Naive thymus-derived CD4-positive, alpha-beta T cell (primary cell): ENCODE measurements at regions of chr11 and their contacts with region 1.

Region 1: GRCh38 chr11:66001942-66002647 is at the starts of genes BANF1 and EIF1AD:
- DNase-seq: peak; percentile 75 to 96 (median 94)
- ATAC-seq: peak; percentile 92
- H3K4me3 ChIP-seq: peak within 1 kb of the TSS; percentile 100
- H3K4me3 Mint-ChIP-seq: peak within 1 kb of the TSS; percentile 97 to 100 (median 99)
- H3K27ac ChIP-seq: peak within 1 kb of the TSS; percentile 92
- H3K27ac Mint-ChIP-seq: peak within 1 kb of the TSS; percentile 96 to 100 (median 98)
- H3K4me1 ChIP-seq: peaks cover 8 to 14% of the 10 kb centered on the region in 2 donors
- H3K4me1 Mint-ChIP-seq: peaks cover 21 to 58% (median 52%) of the 10 kb centered on the region in 7 donors
- H3K27me3 ChIP-seq: no peaks in the 10 kb centered on the region
- H3K27me3 Mint-ChIP-seq: no peaks in the 10 kb centered on the region
- total RNA-seq, gene BANF1: 54.5 to 234 (median 99.4) TPM
- total RNA-seq, gene EIF1AD: 49.9 to 114 (median 66.7) TPM

Region 2: DNA sequence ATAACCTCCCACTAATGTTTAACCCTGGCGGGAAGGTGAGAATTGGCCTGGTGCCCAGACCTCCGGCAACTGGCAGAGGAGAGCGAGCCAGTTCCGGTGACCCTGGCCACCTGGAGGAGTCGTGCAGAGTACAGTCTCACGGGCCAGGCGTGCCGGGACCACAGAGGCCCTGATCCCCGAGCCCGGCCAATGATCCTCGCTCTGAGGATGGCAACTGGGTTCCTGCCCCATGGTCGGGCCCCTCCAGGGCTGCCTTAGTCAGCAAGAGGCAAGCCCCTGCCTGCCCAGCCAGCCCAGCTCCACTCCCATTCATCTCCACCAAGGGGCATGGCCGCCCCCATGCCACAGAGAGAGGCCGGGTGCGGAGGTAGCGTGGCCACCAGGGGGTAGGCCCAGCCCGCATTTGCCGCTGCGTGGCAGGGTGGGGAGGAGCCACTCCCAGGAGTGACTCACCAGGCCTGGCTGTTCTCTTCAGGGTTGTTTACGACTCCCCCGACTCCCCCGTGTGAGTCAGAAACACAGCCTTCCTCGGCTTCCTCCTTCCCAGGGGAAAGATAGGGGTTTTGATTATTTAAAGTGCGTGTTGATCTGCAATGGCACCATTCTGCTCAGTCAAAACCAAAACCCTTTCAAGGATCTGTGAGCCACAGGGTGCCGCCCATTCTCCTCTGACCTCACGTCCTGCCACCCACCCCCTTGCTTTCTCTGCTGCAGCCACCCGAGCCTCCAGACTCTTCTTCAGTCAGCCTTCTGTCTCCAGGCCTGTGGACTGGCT is 619.9 kb before region 1 on chr11 and contains the start of gene SLC25A45:
- CTCF ChIA-PET with region 1: no interaction called
- POLR2A ChIA-PET with region 1: no interaction called
- intact Hi-C with region 1: no loop called
- DNase-seq: peak; percentile 82 to 95 (median 91)
- ATAC-seq: peak; percentile 91
- H3K4me3 ChIP-seq: peak within 1 kb of the TSS; percentile 76
- H3K4me3 Mint-ChIP-seq: peak within 1 kb of the TSS; percentile 82 to 98 (median 93)
- H3K27ac ChIP-seq: peak within 1 kb of the TSS; percentile 82
- H3K27ac Mint-ChIP-seq: peak within 1 kb of the TSS; percentile 97 to 100 (median 99)
- H3K4me1 ChIP-seq: peaks cover 42 to 45% of the 10 kb centered on the region in 2 donors
- H3K4me1 Mint-ChIP-seq: peaks cover 31 to 56% (median 46%) of the 10 kb centered on the region in 7 donors
- H3K27me3 ChIP-seq: no peaks in the 10 kb centered on the region
- H3K27me3 Mint-ChIP-seq: no peaks in the 10 kb centered on the region
- total RNA-seq, gene SLC25A45: 20.2 to 90.6 (median 34.1) TPM

Region 3: DNA sequence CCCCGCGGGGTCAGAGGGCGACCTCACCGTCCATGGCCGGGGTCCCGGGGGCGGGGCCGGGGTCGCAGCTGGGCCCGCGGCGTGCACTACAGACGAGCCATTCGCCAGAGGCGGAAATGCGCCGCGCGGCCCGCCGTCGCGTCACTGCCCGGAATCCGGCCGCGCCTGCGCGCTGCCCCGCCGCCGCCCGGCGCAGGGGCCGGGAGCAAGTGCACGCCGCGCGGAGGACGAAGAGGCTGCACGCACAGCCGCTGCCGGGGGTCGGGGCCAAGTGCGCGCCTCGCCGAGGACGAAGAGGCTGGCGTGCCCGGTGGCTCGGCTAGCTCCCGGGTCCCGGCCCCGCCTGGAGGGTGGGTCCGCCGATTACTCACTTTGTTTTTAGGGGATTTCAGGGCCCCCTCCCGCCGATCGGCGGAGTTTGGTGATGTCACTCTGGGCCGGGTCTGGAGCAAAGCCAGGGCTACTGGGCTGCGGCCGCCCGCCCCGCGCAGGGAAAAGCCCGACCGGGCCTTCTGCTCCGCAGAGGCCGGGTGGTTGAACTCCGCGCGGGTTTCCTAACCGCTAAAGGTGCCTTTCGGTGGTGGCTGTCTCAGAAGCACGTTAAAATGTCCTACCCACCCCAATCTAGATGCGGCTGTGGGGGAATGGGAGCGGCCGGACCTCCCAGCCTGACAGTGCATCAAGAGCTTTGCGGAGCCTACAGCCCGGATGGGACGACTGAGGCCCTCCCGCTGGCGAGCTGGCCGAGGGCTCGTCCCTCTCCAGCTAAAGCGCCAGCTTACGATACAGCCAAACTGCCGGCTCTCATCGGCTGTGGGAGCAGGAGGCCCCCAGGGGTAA is 339.1 kb before region 1 on chr11 and contains the start of gene RELA:
- CTCF ChIA-PET with region 1: no interaction called
- POLR2A ChIA-PET with region 1: interaction called, 4 read pairs
- intact Hi-C with region 1: loop called in 1 of 2 experiments (anchors 1 kb)
- DNase-seq: peak; percentile 84 to 92 (median 89)
- ATAC-seq: peak; percentile 92
- H3K4me3 ChIP-seq: peak within 1 kb of the TSS; percentile 85
- H3K4me3 Mint-ChIP-seq: peak within 1 kb of the TSS; percentile 86 to 93 (median 90)
- H3K27ac ChIP-seq: peak within 1 kb of the TSS; percentile 99
- H3K27ac Mint-ChIP-seq: peak within 1 kb of the TSS; percentile 86 to 95 (median 92)
- H3K4me1 ChIP-seq: peaks cover 20 to 33% of the 10 kb centered on the region in 2 donors
- H3K4me1 Mint-ChIP-seq: peaks cover 10 to 43% (median 31%) of the 10 kb centered on the region in 7 donors
- H3K27me3 ChIP-seq: no peaks in the 10 kb centered on the region
- H3K27me3 Mint-ChIP-seq: no peaks in the 10 kb centered on the region
- total RNA-seq, gene RELA: 106 to 303 (median 165) TPM

Region 4: DNA sequence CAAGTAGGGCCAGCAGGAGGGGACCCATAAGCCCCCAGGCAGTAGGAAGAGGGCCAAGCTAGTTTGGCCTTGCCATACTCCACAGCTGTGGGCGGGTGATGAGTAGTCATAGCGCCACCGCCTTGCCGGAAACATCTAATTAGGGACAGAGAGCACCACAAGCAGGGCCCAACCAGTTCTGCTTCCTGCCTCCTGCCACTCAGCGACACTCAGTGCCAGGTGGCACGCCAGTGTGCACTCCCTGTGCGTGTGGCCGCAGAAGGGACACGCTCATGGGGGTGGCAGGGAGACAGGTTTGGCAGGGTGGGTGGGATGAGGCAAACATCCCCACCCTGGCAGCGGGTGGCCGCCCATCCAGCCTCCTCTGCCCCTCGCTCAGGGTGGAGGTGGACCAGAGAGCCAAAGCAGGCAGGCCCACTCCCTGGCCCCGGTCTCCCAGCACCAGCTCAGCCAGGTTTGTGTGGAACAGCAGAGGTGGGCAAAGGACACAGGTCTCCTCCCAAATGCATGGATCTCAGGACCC is 210.3 kb before region 1 on chr11:
- CTCF ChIA-PET with region 1: no interaction called
- POLR2A ChIA-PET with region 1: no interaction called
- intact Hi-C with region 1: no loop called
- DNase-seq: peak in 2 of 9 donors; percentile 32 to 67
- ATAC-seq: peak; percentile 82
- H3K4me3 ChIP-seq: no peak overlapping the region
- H3K4me3 Mint-ChIP-seq: no peak overlapping the region
- H3K27ac ChIP-seq: no peak overlapping the region
- H3K27ac Mint-ChIP-seq: peak overlapping the region in 1 of 9 donors; percentile 76
- H3K4me1 ChIP-seq: peaks cover 9 to 10% of the 10 kb centered on the region in 2 donors
- H3K4me1 Mint-ChIP-seq: peaks cover 0 to 29% (median 11%) of the 10 kb centered on the region in 7 donors
- H3K27me3 ChIP-seq: peaks cover 10 to 12% of the 10 kb centered on the region in 2 donors
- H3K27me3 Mint-ChIP-seq: peaks cover 22 to 37% (median 27%) of the 10 kb centered on the region in 5 donors

Region 5: DNA sequence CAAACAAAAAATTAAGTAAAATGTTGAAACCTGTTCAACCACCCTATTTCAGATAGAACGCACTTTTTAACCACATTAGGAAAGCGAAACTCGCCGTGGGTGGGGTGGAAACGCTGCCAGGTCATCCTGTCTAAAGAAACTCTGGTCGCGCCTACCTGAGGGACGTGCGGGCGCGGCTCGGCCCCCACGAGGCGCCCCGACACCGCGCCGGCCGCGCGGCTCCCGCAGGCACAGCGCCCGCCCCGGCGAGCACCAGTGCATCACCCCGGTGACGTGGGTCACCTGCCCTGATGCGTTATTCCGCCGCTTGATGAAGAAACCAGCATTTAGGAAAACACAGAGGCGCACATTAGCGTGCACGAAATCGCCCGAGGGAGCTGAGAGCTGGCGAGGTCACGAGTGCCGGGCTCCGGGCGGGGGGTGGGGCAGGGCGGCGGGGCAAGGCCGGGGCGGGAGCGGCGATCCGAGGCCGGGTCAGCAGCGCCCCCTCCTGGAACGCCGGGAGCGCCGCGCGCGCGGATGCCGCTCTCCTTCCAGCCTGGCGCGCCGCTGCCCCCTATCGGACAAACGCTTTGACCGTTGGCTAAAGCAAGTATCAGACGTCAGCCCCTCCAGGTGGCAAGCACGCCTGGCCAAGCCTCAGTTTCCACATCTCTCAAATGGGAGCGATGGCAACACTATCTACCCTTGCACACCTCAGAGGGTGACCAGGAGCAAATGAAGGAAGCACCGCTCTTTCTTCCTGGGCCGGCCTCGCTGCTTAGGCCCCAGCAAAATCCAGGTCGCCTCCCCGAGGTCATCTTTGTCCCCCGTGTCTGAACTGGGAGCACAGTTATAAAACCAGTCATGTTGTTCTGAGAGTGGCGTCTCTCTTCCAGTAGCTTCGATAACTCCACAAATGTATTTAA is 184.0 kb before region 1 on chr11:
- CTCF ChIA-PET with region 1: no interaction called
- POLR2A ChIA-PET with region 1: no interaction called
- intact Hi-C with region 1: loop called in 1 of 2 experiments (anchors 1 kb)
- DNase-seq: peak; percentile 79 to 98 (median 89)
- ATAC-seq: peak; percentile 98
- H3K4me3 ChIP-seq: peak overlapping the region; percentile 72
- H3K4me3 Mint-ChIP-seq: peak overlapping the region; percentile 74 to 90 (median 82)
- H3K27ac ChIP-seq: peak overlapping the region; percentile 75
- H3K27ac Mint-ChIP-seq: peak overlapping the region; percentile 56 to 90 (median 76)
- H3K4me1 ChIP-seq: peaks cover 7% of the 10 kb centered on the region in 2 donors
- H3K4me1 Mint-ChIP-seq: peaks cover 6 to 21% (median 17%) of the 10 kb centered on the region in 7 donors
- H3K27me3 ChIP-seq: no peaks in the 10 kb centered on the region
- H3K27me3 Mint-ChIP-seq: peaks cover 0 to 4% (median 0%) of the 10 kb centered on the region in 5 donors

Region 6: GRCh38 chr11:65961232-65961901 is 40.7 kb before region 1 on chr11 and contains the start of gene SART1:
- CTCF ChIA-PET with region 1: no interaction called
- POLR2A ChIA-PET with region 1: interaction called, 3 read pairs
- intact Hi-C with region 1: loop called (anchors 1 kb)
- DNase-seq: peak; percentile 81 to 97 (median 94)
- ATAC-seq: peak; percentile 96
- H3K4me3 ChIP-seq: peak within 1 kb of the TSS; percentile 83
- H3K4me3 Mint-ChIP-seq: peak within 1 kb of the TSS; percentile 93 to 99 (median 98)
- H3K27ac ChIP-seq: peak within 1 kb of the TSS; percentile 96
- H3K27ac Mint-ChIP-seq: peak within 1 kb of the TSS; percentile 96 to 99 (median 98)
- H3K4me1 ChIP-seq: peaks cover 27 to 38% of the 10 kb centered on the region in 2 donors
- H3K4me1 Mint-ChIP-seq: peaks cover 23 to 64% (median 54%) of the 10 kb centered on the region in 7 donors
- H3K27me3 ChIP-seq: no peaks in the 10 kb centered on the region
- H3K27me3 Mint-ChIP-seq: no peaks in the 10 kb centered on the region
- total RNA-seq, gene SART1: 65.9 to 102 (median 90.8) TPM

Region 7: GRCh38 chr11:66045177-66045639 is 43.1 kb after region 1 on chr11:
- CTCF ChIA-PET with region 1: no interaction called
- POLR2A ChIA-PET with region 1: interaction called, 14 read pairs
- intact Hi-C with region 1: loop called in 1 of 2 experiments (anchors 2 kb)
- DNase-seq: peak; percentile 70 to 89 (median 81)
- ATAC-seq: peak; percentile 98
- H3K4me3 ChIP-seq: no peak overlapping the region
- H3K4me3 Mint-ChIP-seq: peak overlapping the region in 3 of 10 donors; percentile 12 to 29 (median 17)
- H3K27ac ChIP-seq: no peak overlapping the region
- H3K27ac Mint-ChIP-seq: peak overlapping the region in 2 of 9 donors; percentile 17 to 34
- H3K4me1 ChIP-seq: peaks cover 0 to 9% of the 10 kb centered on the region in 2 donors
- H3K4me1 Mint-ChIP-seq: peaks cover 4 to 23% (median 15%) of the 10 kb centered on the region in 7 donors
- H3K27me3 ChIP-seq: no peaks in the 10 kb centered on the region
- H3K27me3 Mint-ChIP-seq: peaks cover 0 to 19% (median 0%) of the 10 kb centered on the region in 5 donors

Region 8: DNA sequence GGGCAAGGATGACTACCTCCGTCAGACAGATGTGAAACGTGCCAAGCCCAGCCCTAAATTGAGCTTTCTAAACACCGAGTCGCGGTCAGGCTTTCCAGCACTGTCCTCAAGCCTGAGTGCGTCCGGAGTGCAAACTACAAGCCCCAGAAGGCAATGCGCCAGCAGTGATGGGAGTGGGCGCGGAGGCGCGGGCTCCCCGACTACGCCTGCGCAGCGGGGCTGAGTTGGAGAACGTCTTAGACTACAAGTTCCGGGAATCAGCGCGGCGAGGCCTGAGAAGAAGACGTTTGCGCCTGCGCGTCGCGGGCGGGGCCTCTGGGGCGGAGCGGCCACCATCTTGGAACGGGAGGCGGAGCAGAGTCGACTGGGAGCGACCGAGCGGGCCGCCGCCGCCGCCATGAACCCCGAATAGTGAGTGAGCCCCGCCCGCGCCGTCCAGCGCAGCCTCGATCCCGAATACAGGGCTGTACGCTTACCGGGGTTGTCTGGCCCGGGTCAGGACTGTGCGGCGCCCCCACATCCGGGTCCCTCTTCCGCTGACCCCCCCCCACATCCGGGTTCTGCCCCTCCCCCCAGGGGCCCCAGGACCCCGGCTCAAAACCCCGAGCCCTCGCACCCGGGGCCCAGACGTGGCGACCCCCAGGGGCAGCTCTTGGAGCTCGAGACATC is 266.3 kb after region 1 on chr11 and contains the start of gene RAB1B:
- CTCF ChIA-PET with region 1: no interaction called
- POLR2A ChIA-PET with region 1: no interaction called
- intact Hi-C with region 1: loop called in 1 of 2 experiments (anchors 1 kb)
- DNase-seq: peak; percentile 99 to 100 (median 99)
- ATAC-seq: peak; percentile 89
- H3K4me3 ChIP-seq: peak within 1 kb of the TSS; percentile 91
- H3K4me3 Mint-ChIP-seq: peak within 1 kb of the TSS; percentile 88 to 100 (median 95)
- H3K27ac ChIP-seq: peak within 1 kb of the TSS; percentile 90
- H3K27ac Mint-ChIP-seq: peak within 1 kb of the TSS; percentile 95 to 99 (median 97)
- H3K4me1 ChIP-seq: peaks cover 16 to 38% of the 10 kb centered on the region in 2 donors
- H3K4me1 Mint-ChIP-seq: peaks cover 26 to 48% (median 34%) of the 10 kb centered on the region in 7 donors
- H3K27me3 ChIP-seq: no peaks in the 10 kb centered on the region
- H3K27me3 Mint-ChIP-seq: peaks cover 0 to 3% (median 0%) of the 10 kb centered on the region in 5 donors
- total RNA-seq, gene RAB1B: 60.6 to 151 (median 70.7) TPM